Panc1 (cell line): ENCODE measurements at regions of chr20 and their contacts with region 1.

Region 1: GRCh38 chr20:41095110-41095969 is 42.0 kb upstream of the PLCG1 start:
- DNase-seq: peak; percentile 18
- ATAC-seq: peak; percentile 88
- H3K4me3 ChIP-seq: no peak overlapping the region
- H3K27ac ChIP-seq: no peak overlapping the region
- H3K4me1 ChIP-seq: no peaks in the 10 kb centered on the region
- H3K27me3 ChIP-seq: no peaks in the 10 kb centered on the region
- CTCF ChIP-seq: peak; percentile 91

Region 2: DNA sequence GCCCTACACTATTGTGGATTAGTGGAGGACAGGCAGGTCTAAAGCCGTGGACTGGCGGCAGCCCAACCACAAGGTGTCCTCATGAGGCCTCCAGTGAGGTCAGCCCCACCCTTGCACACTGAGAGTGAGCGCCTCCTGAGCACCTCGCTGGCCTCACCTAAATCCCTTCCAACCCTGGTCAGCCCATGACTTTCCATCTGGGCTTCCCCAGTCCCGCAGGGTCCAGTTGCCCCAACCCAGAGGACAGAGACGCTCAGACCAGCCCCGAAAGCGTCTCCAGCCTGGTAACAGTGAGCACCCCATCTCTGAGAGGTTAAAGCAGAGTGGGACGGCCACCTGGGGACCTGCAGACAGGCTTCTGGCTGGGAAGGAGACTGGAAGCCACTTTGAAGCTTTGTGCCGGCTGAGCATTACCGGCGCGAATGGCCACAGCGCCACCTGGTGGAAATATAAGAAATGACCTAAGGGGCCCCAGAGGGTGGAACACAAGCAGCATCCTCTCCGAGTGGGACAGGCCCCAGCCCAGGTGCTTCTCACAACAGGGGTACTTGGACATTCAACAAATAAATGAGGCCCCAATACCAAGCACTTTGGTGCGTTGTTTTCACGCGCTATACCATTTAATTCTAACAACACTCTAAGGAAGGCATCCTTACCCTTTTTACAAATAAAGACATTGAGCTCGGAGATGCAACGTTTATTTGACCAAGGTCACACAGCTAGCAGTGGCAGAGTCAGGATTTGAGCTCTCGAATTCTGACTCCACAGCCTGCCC is 132.4 kb before region 1 on chr20:
- CTCF ChIA-PET with region 1: interaction called, 4 read pairs
- POLR2A ChIA-PET with region 1: no interaction called
- in situ Hi-C with region 1: no loop called
- intact Hi-C with region 1: loop called (anchors 1 kb)
- DNase-seq: peak; percentile 25
- ATAC-seq: peak; percentile 96
- H3K4me3 ChIP-seq: no peak overlapping the region
- H3K27ac ChIP-seq: no peak overlapping the region
- H3K4me1 ChIP-seq: no peaks in the 10 kb centered on the region; the same call in 1 of the 2 replicates
- H3K27me3 ChIP-seq: no peaks in the 10 kb centered on the region
- CTCF ChIP-seq: peak; percentile 96

Region 3: GRCh38 chr20:40990542-40991120 is 104.7 kb before region 1 on chr20:
- CTCF ChIA-PET with region 1: interaction called, 16 read pairs
- POLR2A ChIA-PET with region 1: no interaction called
- in situ Hi-C with region 1: no loop called
- intact Hi-C with region 1: loop called (anchors 1 kb)
- DNase-seq: peak; percentile 81
- ATAC-seq: peak; percentile 100
- H3K4me3 ChIP-seq: no peak overlapping the region
- H3K27ac ChIP-seq: no peak overlapping the region
- H3K4me1 ChIP-seq: no peaks in the 10 kb centered on the region
- H3K27me3 ChIP-seq: no peaks in the 10 kb centered on the region
- CTCF ChIP-seq: peak; percentile 89

Region 4: DNA sequence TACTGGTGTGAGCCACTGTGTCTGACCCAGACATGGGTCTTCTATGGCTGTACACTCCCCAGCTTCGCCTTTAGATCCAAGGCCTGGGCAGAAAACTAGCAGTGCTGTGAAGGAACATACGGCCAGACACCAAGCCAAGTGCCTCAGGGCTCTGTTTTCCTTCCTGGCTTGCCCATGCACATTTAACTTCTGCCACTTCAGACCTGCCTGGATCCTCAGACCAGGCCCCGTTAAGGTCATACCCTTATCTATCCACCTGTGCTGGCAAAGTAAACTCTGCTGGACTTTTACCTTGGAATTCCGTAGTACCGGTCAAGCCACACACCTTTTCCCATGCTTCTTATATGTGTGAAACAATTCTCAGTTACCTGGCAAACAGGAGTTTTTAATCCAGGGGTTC is 1449.6 kb after region 1 on chr20:
- CTCF ChIA-PET with region 1: no interaction called
- POLR2A ChIA-PET with region 1: no interaction called
- in situ Hi-C with region 1: no loop called
- intact Hi-C with region 1: no loop called
- DNase-seq: no peak
- ATAC-seq: no peak
- H3K4me3 ChIP-seq: no peak overlapping the region
- H3K27ac ChIP-seq: no peak overlapping the region
- H3K4me1 ChIP-seq: no peaks in the 10 kb centered on the region
- H3K27me3 ChIP-seq: no peaks in the 10 kb centered on the region
- CTCF ChIP-seq: no peak